CD4-positive, alpha-beta memory T cell (primary cell): ENCODE measurements at regions of chr1 and their contacts with region 1.

Region 1: GRCh38 chr1:108963052-108963686 is at the start of gene CLCC1:
- DNase-seq: peak; percentile 92 to 96 (median 94)
- H3K4me3 ChIP-seq: peak within 1 kb of the TSS; percentile 68 to 79
- H3K4me3 Mint-ChIP-seq: peak within 1 kb of the TSS; percentile 88 to 95 (median 90)
- H3K27ac ChIP-seq: peak within 1 kb of the TSS; percentile 81
- H3K27ac Mint-ChIP-seq: peak within 1 kb of the TSS; percentile 91 to 97 (median 96)
- H3K4me1 ChIP-seq: peaks cover 25% of the 10 kb centered on the region
- H3K4me1 Mint-ChIP-seq: peaks cover 18 to 52% (median 31%) of the 10 kb centered on the region in 4 donors
- H3K27me3 ChIP-seq: no peaks in the 10 kb centered on the region
- H3K27me3 Mint-ChIP-seq: no peaks in the 10 kb centered on the region
- total RNA-seq, gene CLCC1: 29.7 to 31.6 TPM

Region 2: GRCh38 chr1:108746372-108747205 is 216.6 kb before region 1 on chr1 and contains the start of gene STXBP3:
- CTCF ChIA-PET with region 1: no interaction called
- POLR2A ChIA-PET with region 1: no interaction called
- intact Hi-C with region 1: loop called (anchors 1 kb)
- DNase-seq: peak; percentile 98 to 99 (median 99)
- H3K4me3 ChIP-seq: peak within 1 kb of the TSS; percentile 57 to 85
- H3K4me3 Mint-ChIP-seq: peak within 1 kb of the TSS; percentile 94 to 100 (median 99)
- H3K27ac ChIP-seq: peak within 1 kb of the TSS; percentile 95
- H3K27ac Mint-ChIP-seq: peak within 1 kb of the TSS; percentile 94 to 100 (median 99)
- H3K4me1 ChIP-seq: peaks cover 41% of the 10 kb centered on the region
- H3K4me1 Mint-ChIP-seq: peaks cover 25 to 47% (median 34%) of the 10 kb centered on the region in 4 donors
- H3K27me3 ChIP-seq: no peaks in the 10 kb centered on the region
- H3K27me3 Mint-ChIP-seq: no peaks in the 10 kb centered on the region
- total RNA-seq, gene STXBP3: 90.9 to 92.5 TPM

Region 3: DNA sequence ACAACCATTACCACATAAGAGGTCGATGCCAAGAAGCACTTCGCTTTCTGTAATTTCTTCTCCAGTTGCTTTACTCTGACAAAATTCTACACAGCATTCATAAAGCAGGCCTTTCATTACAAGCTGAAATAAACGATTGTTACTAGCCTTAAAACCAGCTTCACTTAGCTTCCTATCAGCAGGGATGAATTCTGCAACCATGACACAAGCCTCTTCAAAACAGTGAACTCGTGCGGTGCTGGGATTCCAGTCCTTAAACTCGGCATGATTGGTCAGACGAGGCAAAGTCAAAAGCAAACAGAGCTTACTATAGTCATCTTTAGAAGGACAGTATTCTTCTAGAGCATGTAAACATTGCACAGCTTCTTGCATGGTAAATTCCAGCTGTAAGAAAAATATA is 48.2 kb after region 1 on chr1:
- CTCF ChIA-PET with region 1: no interaction called
- POLR2A ChIA-PET with region 1: no interaction called
- intact Hi-C with region 1: no loop called
- DNase-seq: no peak
- H3K4me3 ChIP-seq: no peak overlapping the region
- H3K4me3 Mint-ChIP-seq: no peak overlapping the region
- H3K27ac ChIP-seq: no peak overlapping the region
- H3K27ac Mint-ChIP-seq: peak overlapping the region in 2 of 7 donors; percentile 27 to 52
- H3K4me1 ChIP-seq: no peaks in the 10 kb centered on the region
- H3K4me1 Mint-ChIP-seq: no peaks in the 10 kb centered on the region
- H3K27me3 ChIP-seq: no peaks in the 10 kb centered on the region
- H3K27me3 Mint-ChIP-seq: no peaks in the 10 kb centered on the region

Region 4: DNA sequence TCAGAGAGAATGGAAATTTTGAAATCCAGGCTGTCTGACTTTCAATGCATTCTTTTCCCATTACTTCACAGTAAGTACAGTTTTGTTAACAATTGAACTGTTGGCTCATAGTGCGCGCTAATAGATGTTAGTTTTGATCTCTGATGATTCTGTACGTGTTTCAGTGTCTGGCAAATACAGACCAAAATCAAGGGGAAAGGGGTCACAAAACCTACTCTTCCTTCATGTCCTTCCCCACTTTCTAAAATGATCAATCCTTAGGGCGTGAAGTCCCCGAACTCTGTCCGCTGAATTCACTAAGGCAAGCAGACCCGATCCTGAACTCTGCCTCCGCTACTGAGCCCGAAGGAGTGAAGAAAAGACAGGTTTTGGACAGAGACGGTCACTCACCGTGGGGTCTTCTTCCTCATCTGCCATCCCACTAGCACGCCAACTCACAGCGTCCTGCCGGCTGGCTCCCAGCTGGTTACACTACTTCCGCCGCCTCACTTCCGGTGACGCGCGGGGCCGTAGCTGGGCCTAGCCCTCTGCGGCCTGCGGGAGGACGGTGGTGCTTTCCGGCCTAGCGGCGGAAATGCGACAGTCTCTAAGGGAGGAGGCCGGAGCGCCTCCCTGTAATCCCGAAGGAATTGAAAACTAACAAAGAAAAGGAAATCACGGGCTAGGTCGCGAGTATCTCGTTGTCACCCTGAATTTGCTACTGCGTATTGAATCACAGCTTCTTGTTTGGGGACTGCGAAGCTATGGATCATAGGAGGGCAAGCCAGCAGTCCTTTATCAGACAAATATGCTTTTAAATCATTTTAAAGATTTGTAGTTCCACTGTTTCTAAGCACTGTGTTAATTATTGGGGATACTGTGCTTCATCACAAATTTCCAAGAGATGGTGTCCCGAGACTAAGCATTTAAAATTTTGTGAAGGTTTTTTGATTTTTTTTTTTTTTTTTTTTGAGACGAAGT is 112.6 kb after region 1 on chr1 and contains the start of gene TAF13:
- CTCF ChIA-PET with region 1: no interaction called
- POLR2A ChIA-PET with region 1: interaction called, 12 read pairs
- intact Hi-C with region 1: loop called (anchors 1 kb)
- DNase-seq: peak; percentile 82 to 88 (median 85)
- H3K4me3 ChIP-seq: peak within 1 kb of the TSS; percentile 95 to 99
- H3K4me3 Mint-ChIP-seq: peak within 1 kb of the TSS; percentile 95 to 100 (median 96)
- H3K27ac ChIP-seq: peak within 1 kb of the TSS; percentile 93
- H3K27ac Mint-ChIP-seq: peak within 1 kb of the TSS; percentile 99 to 100 (median 99)
- H3K4me1 ChIP-seq: peaks cover 17% of the 10 kb centered on the region
- H3K4me1 Mint-ChIP-seq: peaks cover 7 to 23% (median 17%) of the 10 kb centered on the region in 4 donors
- H3K27me3 ChIP-seq: no peaks in the 10 kb centered on the region
- H3K27me3 Mint-ChIP-seq: no peaks in the 10 kb centered on the region
- total RNA-seq, gene TAF13: 12.5 to 14.6 TPM

Region 5: DNA sequence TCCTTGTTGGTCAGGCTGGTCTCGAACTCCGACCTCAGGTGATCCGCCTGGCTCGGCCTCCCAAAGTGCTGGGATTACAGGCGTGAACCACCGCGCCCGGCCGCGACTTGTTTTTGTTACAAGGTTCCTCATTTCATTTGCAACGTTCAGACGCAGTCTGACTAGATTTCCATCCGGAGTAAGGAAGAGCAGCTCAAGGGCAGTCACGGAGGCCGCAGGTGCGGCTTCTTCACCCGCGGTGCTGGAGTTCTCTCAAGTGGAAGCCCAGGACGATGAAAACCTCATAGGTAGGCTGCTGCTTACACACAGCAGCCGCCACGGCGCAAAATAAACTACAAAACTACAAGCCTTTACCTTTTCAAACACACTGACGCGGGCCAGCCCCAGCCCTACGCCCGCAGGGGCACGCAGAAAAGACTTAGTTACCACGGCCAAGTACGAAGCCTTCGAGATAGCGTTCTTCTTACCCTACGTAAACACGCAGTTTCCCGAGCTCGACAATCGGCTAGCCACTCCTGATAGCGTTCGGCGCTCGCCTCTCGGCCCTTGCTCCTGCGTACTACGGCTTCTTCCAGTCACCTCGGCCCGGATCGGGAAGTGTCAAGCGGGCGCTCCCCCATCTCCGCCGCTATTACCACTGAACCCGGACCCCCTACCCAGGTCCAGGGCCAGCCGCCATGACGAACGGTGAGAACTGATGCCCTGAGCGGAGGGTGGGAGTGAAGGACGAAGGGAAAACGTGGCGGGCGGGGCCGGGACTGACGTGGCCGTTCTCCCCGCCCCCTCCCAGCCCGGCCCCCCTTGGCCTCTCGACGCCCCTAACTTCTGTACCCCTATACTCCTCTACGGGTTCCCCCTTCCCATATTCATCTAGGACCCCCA is 127.3 kb after region 1 on chr1 and contains the start of gene TMEM167B:
- CTCF ChIA-PET with region 1: no interaction called
- POLR2A ChIA-PET with region 1: interaction called, 16 read pairs
- intact Hi-C with region 1: no loop called
- DNase-seq: peak; percentile 88 to 93 (median 89)
- H3K4me3 ChIP-seq: peak within 1 kb of the TSS; percentile 67 to 72
- H3K4me3 Mint-ChIP-seq: peak within 1 kb of the TSS; percentile 93 to 97 (median 94)
- H3K27ac ChIP-seq: peak within 1 kb of the TSS; percentile 90
- H3K27ac Mint-ChIP-seq: peak within 1 kb of the TSS; percentile 89 to 99 (median 98)
- H3K4me1 ChIP-seq: peaks cover 32% of the 10 kb centered on the region
- H3K4me1 Mint-ChIP-seq: peaks cover 18 to 48% (median 36%) of the 10 kb centered on the region in 4 donors
- H3K27me3 ChIP-seq: no peaks in the 10 kb centered on the region
- H3K27me3 Mint-ChIP-seq: no peaks in the 10 kb centered on the region
- total RNA-seq, gene TMEM167B: 42.9 to 47.9 TPM